Activated naive CD4-positive, alpha-beta T cell treated with anti-CD3 and anti-CD28 coated beads for 36 hours (primary cell): ENCODE measurements at regions of chr14 and their contacts with region 1.

Region 1: GRCh38 chr14:21039585-21040369 is 2.4 kb upstream of the RNASE7 start:
- DNase-seq: peak; percentile 27
- H3K4me3 Mint-ChIP-seq: no peak overlapping the region
- H3K27ac Mint-ChIP-seq: no peak overlapping the region
- H3K4me1 Mint-ChIP-seq: peaks cover 7% of the 10 kb centered on the region
- H3K27me3 Mint-ChIP-seq: peaks cover 9% of the 10 kb centered on the region

Region 2: GRCh38 chr14:21003788-21004346 is 35.9 kb before region 1 on chr14:
- CTCF ChIA-PET with region 1: interaction called, 17 read pairs
- intact Hi-C with region 1: no loop called
- DNase-seq: no peak
- H3K4me3 Mint-ChIP-seq: no peak overlapping the region
- H3K27ac Mint-ChIP-seq: no peak overlapping the region
- H3K4me1 Mint-ChIP-seq: no peaks in the 10 kb centered on the region
- H3K27me3 Mint-ChIP-seq: no peaks in the 10 kb centered on the region